SK-N-SH (cell line): ENCODE measurements at regions of chr10 and their contacts with region 1.

Region 1: DNA sequence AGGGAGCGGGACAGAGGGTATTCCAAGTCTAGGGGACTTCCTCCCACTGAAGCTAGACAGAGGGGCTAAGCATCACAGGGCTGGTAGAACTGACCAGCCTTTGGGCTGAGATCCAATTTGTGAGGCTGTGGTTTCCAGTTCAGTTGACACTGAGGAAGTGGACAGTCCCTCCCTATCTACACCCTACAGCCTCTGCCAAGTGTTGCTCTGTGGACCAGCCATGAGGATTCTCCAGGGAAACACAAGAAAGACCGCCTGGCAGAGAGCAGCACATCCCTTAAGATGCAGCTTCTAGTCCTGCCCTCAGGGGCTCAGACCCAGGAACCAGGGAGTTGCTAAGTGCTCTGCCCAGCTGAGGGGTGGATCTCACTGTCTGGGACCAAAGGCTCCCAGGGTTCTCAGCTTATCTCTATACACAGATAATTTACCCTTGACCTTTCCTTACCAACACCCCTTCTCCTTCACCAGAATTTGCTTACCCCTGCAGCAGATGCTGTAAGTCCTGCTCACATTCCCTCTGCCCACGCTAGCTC is 252.0 kb downstream of the SKIDA1 start:
- DNase-seq: no peak
- H3K4me3 ChIP-seq: no peak overlapping the region
- H3K27ac ChIP-seq: no peak overlapping the region
- H3K4me1 ChIP-seq: no peaks in the 10 kb centered on the region
- H3K27me3 ChIP-seq: no peaks in the 10 kb centered on the region
- CTCF ChIP-seq: no peak
- EP300 ChIP-seq: no peak
- RAD21 ChIP-seq: no peak

Region 2: DNA sequence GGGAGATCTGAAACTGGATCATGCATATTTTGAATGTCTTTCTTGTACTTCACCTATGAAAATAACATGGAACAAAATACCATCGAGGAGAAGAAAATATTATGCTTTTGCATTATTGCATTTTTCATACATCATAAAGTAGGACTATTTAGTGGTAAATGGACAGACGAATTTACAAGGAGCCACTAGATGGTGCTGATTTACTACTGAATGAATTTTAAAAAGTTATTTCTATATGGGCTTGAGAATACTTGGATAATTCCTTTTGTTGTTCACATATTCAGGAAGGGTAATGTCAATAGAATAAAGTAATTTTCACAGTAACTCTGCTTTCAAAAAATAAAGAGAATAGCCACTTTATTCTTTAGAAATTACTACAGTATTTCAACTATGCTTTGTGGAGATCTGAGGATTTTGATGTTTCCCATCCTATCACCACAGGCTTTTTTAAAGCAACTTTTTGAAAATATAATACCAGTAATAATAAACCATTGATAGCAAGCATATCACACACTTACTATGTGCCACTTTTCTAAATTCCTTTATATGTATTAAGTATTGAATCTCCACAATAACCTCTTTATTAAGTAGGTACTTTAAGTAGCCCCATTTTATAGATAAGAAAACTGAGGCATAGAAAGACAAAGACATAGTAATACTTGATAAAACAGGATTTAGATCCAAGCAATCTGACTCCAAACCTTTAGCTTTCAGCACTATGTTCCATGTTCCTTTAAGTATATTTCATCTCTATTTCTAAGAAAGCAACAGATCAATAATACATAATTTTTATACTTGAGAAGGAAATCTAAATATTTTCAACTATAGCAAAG is 415.0 kb before region 1 on chr10:
- CTCF ChIA-PET with region 1: interaction called, 11 read pairs
- POLR2A ChIA-PET with region 1: no interaction called
- DNase-seq: peak; percentile 10
- H3K4me3 ChIP-seq: no peak overlapping the region
- H3K27ac ChIP-seq: peak overlapping the region in 1 of 2 experiments; percentile 55; a peak in 2 of 4 replicates
- H3K4me1 ChIP-seq: peaks cover 0 to 7% of the 10 kb centered on the region in 2 experiments; a peak in 1 of 4 replicates
- H3K27me3 ChIP-seq: no peaks in the 10 kb centered on the region
- CTCF ChIP-seq: peak; percentile 76
- EP300 ChIP-seq: no peak
- RAD21 ChIP-seq: peak; percentile 83

Region 3: GRCh38 chr10:21069929-21070700 is 203.4 kb before region 1 on chr10:
- CTCF ChIA-PET with region 1: interaction called, 12 read pairs
- POLR2A ChIA-PET with region 1: no interaction called
- DNase-seq: peak; percentile 57
- H3K4me3 ChIP-seq: no peak overlapping the region; a peak in 1 of 4 replicates
- H3K27ac ChIP-seq: peak overlapping the region in 1 of 2 experiments; percentile 90; a peak in 2 of 4 replicates
- H3K4me1 ChIP-seq: peaks cover 9 to 31% of the 10 kb centered on the region in 2 experiments; a peak in 2 of 4 replicates
- H3K27me3 ChIP-seq: no peaks in the 10 kb centered on the region
- CTCF ChIP-seq: no peak
- EP300 ChIP-seq: peak in 1 of 2 experiments; percentile 57; a peak in 1 of 4 replicates
- RAD21 ChIP-seq: no peak; the same call in 1 of the 2 replicates

Region 4: DNA sequence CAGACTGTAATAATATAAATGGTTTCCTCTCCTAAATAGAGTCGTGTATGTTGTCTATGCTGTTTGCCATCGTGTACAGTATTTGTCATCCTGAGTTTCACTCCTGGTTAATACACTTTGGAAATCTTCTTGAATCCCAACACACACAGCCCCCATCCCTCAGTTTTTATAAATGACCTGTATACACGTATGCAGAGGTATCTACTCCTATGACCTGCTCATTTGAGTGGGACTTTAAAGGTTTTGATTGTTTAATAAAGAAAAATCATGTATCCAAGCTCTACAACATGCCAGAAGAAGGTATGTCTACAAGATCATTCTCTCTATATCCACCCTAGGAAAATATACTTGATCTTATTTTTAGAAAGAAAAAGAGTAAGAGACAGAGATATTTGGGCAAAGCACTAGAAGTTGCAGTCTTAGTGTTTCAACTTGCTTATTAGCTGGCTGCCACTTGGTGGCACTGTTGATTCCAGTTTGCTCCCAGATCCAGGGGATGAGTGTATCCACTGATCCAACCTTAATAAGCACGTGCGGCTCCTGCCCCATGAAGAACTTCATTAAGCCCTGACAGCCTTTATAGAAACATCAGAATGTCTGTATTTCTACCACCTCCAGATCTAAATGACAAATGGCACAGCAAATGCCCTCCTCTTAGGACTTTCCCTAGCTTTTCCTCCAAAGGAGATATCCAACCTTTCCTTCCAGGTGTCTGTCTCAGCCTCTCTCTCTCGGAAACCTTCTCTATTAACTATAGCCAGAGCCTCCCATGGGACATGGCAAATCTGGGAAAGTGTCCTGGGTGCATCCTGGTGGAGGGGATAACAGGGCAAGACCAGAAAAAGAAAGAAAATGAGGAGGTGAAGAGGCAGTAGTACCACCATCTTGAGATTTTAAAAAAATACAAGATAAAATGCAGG is 194.8 kb before region 1 on chr10:
- CTCF ChIA-PET with region 1: interaction called, 54 read pairs
- POLR2A ChIA-PET with region 1: no interaction called
- DNase-seq: peak; percentile 63
- H3K4me3 ChIP-seq: peak overlapping the region in 1 of 2 experiments; percentile 25; a peak in 1 of 4 replicates
- H3K27ac ChIP-seq: no peak overlapping the region
- H3K4me1 ChIP-seq: peaks cover 0 to 3% of the 10 kb centered on the region in 2 experiments; a peak in 1 of 4 replicates
- H3K27me3 ChIP-seq: no peaks in the 10 kb centered on the region
- CTCF ChIP-seq: peak; percentile 87
- EP300 ChIP-seq: no peak
- RAD21 ChIP-seq: peak; percentile 98

Region 5: DNA sequence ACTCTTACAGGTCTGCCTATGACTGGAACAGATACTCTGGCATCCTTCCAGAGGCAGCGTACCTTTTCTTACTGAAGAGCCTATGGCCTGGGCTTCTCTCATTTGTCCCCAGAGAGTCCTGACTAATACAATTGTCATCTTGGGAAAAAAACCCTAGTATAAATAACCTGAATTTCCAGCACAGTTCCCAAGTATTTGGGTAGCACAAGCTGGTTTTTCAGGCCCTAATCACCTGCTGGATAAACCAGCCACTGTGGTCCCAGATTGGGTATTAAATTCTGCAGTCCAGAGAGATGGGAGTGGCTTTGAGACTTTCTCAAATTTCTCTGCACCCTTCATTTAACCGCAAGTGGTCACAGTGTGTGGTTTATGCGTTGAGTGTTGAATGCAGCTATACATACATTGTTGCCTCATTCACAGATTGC is 189.6 kb before region 1 on chr10:
- CTCF ChIA-PET with region 1: interaction called, 54 read pairs
- POLR2A ChIA-PET with region 1: no interaction called
- DNase-seq: no peak
- H3K4me3 ChIP-seq: no peak overlapping the region
- H3K27ac ChIP-seq: no peak overlapping the region
- H3K4me1 ChIP-seq: no peaks in the 10 kb centered on the region; a peak in 1 of 4 replicates
- H3K27me3 ChIP-seq: no peaks in the 10 kb centered on the region
- CTCF ChIP-seq: no peak
- EP300 ChIP-seq: no peak
- RAD21 ChIP-seq: no peak

Region 6: DNA sequence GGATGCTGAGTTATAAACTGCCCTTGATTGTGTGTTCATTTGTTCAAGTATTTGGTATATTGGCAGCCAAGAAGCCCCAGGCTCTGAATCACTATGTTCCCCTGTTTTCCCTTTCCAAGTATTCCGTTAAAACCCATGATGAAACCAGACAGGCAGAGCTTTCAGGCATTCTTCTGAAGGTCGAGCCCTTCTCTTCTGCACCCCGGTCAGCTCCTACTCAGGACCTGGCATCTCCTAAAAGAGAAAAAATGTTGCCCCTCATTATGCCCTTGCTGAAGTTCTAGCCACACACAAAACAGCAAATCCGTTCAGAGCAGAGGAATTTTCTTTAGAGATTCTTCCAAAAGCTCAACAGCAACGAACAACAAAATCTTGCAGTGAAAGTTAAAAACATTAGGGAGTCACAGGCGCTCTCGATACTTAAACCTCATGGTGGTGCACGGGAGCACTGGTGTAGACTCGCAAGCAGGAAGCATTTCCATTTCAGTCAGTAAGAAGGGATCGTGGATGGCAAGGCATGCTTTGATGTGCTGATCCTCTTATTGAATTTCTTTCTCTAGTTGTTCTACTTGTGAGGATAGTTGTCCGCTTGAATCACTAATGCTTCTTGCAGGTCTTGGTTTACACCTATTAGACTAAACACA is 12.8 kb before region 1 on chr10:
- CTCF ChIA-PET with region 1: interaction called, 20 read pairs
- POLR2A ChIA-PET with region 1: no interaction called
- DNase-seq: no peak
- H3K4me3 ChIP-seq: no peak overlapping the region
- H3K27ac ChIP-seq: no peak overlapping the region; a peak in 1 of 4 replicates
- H3K4me1 ChIP-seq: peaks cover 0 to 7% of the 10 kb centered on the region in 2 experiments; a peak in 1 of 4 replicates
- H3K27me3 ChIP-seq: no peaks in the 10 kb centered on the region
- CTCF ChIP-seq: no peak
- EP300 ChIP-seq: no peak
- RAD21 ChIP-seq: no peak

Region 7: GRCh38 chr10:21364196-21365114 is 91.0 kb after region 1 on chr10:
- CTCF ChIA-PET with region 1: no interaction called
- POLR2A ChIA-PET with region 1: no interaction called
- DNase-seq: no peak
- H3K4me3 ChIP-seq: no peak overlapping the region
- H3K27ac ChIP-seq: peak overlapping the region; percentile 66 to 79
- H3K4me1 ChIP-seq: peaks cover 17 to 22% of the 10 kb centered on the region in 2 experiments; a peak in 3 of 4 replicates
- H3K27me3 ChIP-seq: no peaks in the 10 kb centered on the region
- CTCF ChIP-seq: no peak
- EP300 ChIP-seq: peak in 1 of 2 experiments; percentile 26; a peak in 1 of 4 replicates
- RAD21 ChIP-seq: no peak

Region 8: GRCh38 chr10:21427804-21428481 is 154.5 kb after region 1 on chr10:
- CTCF ChIA-PET with region 1: no interaction called
- POLR2A ChIA-PET with region 1: no interaction called
- DNase-seq: no peak
- H3K4me3 ChIP-seq: no peak overlapping the region
- H3K27ac ChIP-seq: no peak overlapping the region
- H3K4me1 ChIP-seq: peaks cover 0 to 13% of the 10 kb centered on the region in 2 experiments; a peak in 2 of 4 replicates
- H3K27me3 ChIP-seq: no peaks in the 10 kb centered on the region
- CTCF ChIP-seq: no peak
- EP300 ChIP-seq: no peak
- RAD21 ChIP-seq: no peak